ENCODE measurements at regions of chr9 and their contacts with region 1.

Region 1: GRCh38 chr9:75238311-75238978 is 150.1 kb downstream of the OSTF1 start:
- DNase-seq: peak; percentile 28
- CTCF ChIP-seq: peak; percentile 52

Region 2: GRCh38 chr9:74639112-74639511 is 599.3 kb before region 1 on chr9:
- in situ Hi-C with region 1: no loop called
- DNase-seq: no peak
- CTCF ChIP-seq: no peak

Region 3: DNA sequence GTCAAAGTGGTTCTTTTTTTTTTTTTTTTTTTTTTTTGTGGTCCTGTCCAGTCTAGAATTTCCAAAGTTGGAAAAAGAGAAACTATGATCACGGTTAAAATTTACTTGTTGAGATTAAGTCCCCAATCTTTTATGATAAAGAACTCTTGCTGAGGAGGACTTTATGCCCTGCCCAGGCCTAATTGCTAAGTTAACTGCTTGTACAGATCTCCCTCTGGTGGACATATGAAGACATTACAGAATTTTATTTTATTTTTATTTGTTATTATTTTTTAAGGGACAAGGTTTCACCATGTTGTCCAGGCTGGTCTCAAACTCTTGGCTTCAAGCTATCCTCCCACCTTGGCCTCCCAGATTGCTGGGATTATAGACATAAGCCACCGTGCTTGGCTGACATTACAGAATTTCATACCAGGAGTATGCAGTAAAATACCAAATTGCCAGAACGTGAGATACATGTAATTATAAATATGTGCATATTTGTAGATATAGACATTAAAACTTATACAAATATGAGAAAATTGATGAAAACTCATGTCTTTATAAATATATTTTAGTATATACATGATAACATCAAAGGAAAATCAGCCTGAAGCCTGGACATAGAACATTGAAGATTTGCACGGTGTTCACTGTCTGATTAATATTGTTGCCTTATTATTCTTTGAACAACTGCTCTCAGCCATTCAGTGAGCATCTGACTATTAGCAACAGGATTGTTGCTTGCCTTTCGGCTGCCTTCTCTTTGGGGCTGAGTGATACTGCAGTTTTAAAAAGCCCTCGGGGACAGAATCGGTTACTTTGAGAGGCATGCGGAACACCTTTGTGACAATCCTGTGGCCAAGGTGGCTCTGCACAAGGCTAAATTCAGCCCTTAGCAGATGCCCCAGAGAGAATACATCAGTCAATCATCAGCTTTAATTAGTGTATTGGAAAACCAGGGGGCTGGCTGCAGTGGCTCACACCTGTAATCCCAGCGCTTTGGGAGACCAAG is 1064.8 kb after region 1 on chr9:
- in situ Hi-C with region 1: loop called (anchors 25 kb)
- DNase-seq: peak; percentile 55
- CTCF ChIP-seq: peak; percentile 52